Right ventricle myocardium superior (tissue), 1 donor: ENCODE measurements at regions of chr1 and their contacts with region 1.

Region 1: GRCh38 chr1:63935143-63935542 is 161.3 kb downstream of the ROR1 start:
- DNase-seq: no peak
- ATAC-seq: peak; percentile 80

Region 2: DNA sequence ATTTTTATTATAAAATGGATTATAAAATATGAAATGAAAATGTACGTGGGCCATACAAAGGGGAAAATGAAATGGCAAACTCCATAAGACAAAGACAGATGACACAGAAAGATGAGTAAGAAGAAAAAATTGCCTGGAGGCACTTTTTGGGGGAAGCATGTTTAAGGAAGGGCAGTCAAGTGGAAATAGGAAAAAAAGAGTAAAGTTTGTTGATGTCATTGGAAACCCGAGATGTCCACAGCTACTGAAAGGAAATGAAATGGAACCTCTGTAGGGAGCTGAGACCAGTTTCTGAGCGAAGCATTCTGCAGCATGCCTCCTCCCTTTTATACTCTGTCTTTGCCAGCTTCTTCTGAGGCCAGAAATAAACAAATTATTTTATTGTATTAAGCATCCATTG is 64.9 kb after region 1 on chr1:
- intact Hi-C with region 1: no loop called
- DNase-seq: no peak
- ATAC-seq: no peak

Region 3: GRCh38 chr1:64136752-64137411 is 201.7 kb after region 1 on chr1:
- intact Hi-C with region 1: loop called (anchors 10 kb)
- DNase-seq: peak; percentile 79
- ATAC-seq: peak; percentile 93

Region 4: GRCh38 chr1:64535938-64536835 is 601.0 kb after region 1 on chr1:
- intact Hi-C with region 1: no loop called
- DNase-seq: no peak
- ATAC-seq: no peak

Region 5: DNA sequence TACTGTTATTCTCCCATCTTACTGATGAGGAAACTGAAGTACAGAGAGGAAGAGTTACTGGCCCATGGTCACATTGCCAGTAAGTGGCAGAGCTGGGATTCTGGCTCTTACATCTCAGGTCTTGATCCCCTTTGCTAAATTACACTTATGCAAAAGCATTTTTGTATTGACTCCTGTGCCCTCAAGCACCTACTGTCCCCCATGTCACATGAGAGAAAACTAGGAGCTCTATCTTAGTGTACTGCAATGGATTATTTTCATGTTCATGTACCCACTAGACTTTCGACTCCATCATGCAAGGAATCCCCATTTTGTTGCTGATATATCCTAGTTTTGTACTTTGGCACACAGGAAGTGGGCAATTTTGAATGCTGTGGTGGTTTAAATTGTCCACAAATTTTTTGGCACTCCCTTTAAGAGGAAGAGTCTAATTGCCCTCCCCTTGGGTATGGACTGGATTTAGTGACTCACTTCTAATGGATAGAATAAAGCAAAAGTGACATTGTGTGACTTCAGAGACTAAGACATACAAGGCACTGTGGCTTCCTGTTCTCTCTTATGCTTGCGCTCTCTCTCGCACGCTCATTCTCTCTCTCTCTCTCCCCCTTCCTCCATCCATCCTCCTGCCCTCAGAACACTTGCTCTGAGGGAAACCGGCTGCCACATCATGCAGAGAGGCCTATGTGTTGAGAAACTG is 1074.7 kb after region 1 on chr1:
- intact Hi-C with region 1: no loop called
- DNase-seq: no peak
- ATAC-seq: no peak